Panc1 (cell line): ENCODE measurements at regions of chr20 and their contacts with region 1.

Region 1: DNA sequence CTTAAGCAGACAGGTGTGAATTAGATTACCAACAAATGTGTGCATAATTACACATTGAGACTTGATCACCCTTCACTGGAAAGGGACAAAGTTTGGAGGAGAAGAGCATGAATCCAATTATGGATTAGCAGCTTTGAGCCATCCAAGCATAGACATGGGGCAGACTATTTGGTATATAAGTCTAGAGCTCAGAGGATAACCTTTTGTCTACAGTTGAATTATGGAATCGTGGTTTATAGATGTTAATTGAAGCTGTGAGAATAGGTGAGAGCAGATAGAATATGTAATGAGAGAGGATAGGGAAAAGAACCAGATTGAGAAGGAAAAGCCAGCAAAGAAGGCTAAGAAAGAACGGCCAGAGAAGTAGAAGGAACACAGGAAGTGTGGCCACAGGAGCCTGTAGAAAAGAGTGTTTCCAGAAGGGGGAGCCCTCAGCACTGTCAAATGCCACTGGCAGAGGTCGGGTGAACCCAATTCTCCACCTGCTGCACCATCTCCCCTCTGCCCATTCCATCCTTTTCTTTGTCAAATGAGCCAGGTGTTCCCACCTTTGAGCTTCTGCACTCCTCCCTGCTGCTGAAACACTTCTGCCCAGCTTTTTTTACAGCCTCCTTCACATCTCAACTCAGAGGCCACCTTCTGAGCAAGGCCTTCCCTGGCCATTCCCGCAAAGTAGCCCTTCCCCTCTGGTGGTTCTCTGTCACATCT is 7.3 kb downstream of the DNTTIP1 start:
- DNase-seq: no peak
- ATAC-seq: peak; percentile 96
- H3K4me3 ChIP-seq: no peak overlapping the region
- H3K27ac ChIP-seq: no peak overlapping the region
- H3K4me1 ChIP-seq: no peaks in the 10 kb centered on the region
- H3K27me3 ChIP-seq: no peaks in the 10 kb centered on the region
- CTCF ChIP-seq: peak; percentile 84

Region 2: DNA sequence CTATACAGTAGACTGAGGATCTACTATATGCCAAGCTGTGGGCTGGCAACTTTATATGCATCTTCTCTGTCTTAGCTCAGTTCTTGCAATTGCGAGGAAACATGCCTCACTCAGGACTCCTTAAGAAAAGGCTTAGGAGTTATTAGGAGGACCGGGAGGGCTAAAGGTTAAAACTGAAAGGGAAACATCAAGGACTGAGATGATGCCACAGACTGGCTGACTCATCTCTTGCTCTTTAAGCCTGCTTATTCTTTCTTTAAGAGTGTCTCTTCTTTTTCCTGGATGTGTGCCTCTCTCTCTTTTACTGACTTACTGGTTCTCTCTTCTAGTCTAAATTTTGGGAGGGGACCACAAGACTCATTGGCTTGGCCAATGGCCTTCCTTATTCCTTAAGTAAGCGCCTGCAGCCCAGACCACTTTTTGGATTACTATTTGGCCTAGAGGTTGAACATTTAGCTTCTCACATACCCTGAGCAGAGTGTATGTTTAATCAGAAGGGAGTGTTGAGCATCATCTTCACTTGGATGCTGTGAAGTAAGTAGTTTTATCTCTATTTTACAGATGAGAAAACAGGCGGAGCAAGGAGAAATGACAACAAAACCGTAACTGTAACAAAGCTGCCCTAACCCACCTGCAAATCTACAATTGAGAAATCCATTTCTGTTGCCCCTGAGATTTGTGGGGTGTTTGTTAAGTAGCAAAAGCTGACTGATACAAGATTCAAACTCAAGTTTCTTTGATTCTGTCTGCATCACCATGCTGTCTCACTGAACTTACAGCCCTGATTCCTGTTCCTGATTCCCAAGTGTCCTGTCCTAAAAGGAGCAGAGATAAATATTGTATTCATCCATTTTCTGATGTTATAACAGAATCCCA is 443.6 kb before region 1 on chr20:
- CTCF ChIA-PET with region 1: no interaction called
- POLR2A ChIA-PET with region 1: interaction called, 12 read pairs
- in situ Hi-C with region 1: no loop called
- intact Hi-C with region 1: no loop called
- DNase-seq: no peak
- ATAC-seq: no peak
- H3K4me3 ChIP-seq: no peak overlapping the region
- H3K27ac ChIP-seq: no peak overlapping the region
- H3K4me1 ChIP-seq: peaks cover 16% of the 10 kb centered on the region
- H3K27me3 ChIP-seq: no peaks in the 10 kb centered on the region
- CTCF ChIP-seq: no peak